B cell (primary cell): ENCODE measurements at regions of chr10 and their contacts with region 1.

Region 1: DNA sequence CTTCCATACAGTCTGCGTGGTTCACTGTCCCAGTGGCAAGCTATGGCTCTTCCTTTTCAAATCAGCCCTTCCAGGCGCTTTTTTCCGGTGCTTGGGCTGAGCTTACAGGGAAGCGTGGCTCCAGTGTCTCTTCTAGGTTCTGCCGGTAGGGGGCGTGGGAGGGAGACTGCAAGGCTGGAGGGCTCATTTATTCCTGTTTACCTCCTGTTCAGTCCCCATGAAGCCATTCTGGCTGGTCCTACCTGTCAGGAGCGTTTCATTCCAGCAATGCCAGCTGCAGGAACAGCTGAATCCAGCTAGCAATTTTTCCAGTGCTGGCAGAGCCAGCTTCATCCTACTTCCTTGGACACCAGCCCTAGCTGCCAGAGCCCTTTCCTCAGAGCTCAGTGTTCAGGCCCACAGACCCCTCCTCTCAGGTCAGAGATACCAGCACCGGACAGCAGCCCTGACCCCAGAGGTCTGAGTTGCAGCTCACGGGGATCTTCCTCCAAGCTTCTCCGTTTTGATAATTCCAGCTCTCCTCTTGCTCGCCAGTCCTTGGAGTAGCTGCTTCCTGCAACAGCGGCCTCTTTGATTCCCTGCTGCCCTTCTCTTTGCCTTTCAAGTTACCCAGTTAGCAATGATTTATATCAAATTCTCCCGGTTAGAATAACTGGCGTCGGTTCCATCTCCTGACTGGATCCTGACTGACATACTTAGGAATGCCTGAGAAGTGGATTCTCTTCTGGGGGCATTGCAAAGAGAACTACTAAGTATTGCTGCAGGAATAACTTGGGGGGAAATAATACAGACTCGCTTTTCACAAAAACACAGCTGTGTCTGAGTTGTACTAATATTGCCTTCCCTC is 129.8 kb downstream of the FRMD4A start:
- DNase-seq: no peak
- ATAC-seq: no peak
- H3K4me3 ChIP-seq: no peak overlapping the region
- H3K4me3 Mint-ChIP-seq: no peak overlapping the region
- H3K27ac ChIP-seq: no peak overlapping the region
- H3K27ac Mint-ChIP-seq: no peak overlapping the region
- H3K4me1 ChIP-seq: no peaks in the 10 kb centered on the region
- H3K4me1 Mint-ChIP-seq: no peaks in the 10 kb centered on the region
- H3K27me3 ChIP-seq: peaks cover 0 to 9% (median 2%) of the 10 kb centered on the region in 4 experiments
- H3K27me3 Mint-ChIP-seq: peaks cover 29% of the 10 kb centered on the region
- CTCF ChIP-seq: no peak

Region 2: DNA sequence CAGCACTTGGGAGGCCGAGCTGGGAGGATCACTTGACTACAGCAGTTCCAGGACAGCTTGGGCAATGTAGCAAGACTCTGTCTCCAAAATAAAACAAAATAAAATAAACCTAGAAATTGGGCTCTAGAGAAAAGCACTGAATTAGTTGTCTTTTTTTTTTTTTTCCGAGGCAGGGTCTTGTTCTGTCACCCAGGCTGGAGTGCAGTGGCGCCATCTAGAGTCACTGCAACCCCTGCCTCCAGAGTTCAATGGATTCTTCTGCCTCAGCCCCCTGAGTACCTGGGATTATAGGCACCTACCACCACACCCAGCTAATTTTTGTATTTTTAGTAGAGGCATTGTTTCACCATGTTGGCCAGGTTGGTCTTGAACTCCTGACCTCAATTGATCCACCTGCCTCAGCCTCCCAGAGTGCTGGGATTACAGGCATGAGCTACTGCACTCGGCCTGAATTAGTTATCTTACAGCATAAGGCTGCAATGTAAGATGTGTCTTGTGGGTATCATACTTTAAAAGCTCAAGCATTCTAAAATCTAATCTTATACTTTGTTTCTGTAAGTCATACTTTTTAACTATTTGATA is 771.0 kb after region 1 on chr10:
- CTCF ChIA-PET with region 1: interaction called, 63 read pairs
- POLR2A ChIA-PET with region 1: no interaction called
- intact Hi-C with region 1: loop called (anchors 1 kb)
- DNase-seq: peak; percentile 68
- ATAC-seq: peak; percentile 58
- H3K4me3 ChIP-seq: no peak overlapping the region
- H3K4me3 Mint-ChIP-seq: no peak overlapping the region
- H3K27ac ChIP-seq: no peak overlapping the region
- H3K27ac Mint-ChIP-seq: no peak overlapping the region
- H3K4me1 ChIP-seq: no peaks in the 10 kb centered on the region
- H3K4me1 Mint-ChIP-seq: peaks cover 2% of the 10 kb centered on the region
- H3K27me3 ChIP-seq: peaks cover 0 to 14% (median 0%) of the 10 kb centered on the region in 4 experiments
- H3K27me3 Mint-ChIP-seq: peaks cover 14% of the 10 kb centered on the region
- CTCF ChIP-seq: peak; percentile 85